H1 (cell line): ENCODE measurements at regions of chr15 and their contacts with region 1.

Region 1: DNA sequence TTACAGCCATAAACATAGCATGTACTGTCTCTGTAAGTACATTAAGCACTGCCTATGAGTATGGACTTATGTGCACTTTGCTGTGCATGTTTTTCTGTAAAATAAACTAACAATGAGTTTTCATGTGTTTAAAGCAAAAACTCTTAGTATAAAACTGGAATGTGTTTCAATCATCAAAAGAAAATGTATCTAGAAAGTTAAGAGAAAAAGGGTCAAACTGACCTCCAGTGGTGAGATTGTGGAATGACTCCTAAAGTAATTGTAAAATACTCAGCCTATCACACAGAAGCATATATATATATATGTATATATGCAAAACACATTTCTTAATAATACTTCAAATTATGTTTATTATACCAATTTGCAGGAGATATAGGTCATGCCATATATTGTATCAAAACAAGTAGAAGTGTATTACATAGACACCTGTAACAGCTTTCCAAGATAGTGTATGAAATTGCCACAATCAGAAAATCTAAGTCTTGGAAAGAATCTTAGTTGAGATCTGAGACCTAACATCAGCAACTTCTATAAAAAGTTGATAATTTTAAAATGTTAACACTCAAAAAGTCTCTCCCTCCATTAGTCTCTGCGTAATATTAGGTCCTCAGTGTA is 199.6 kb downstream of the FMN1 start:
- DNase-seq: no peak
- H3K4me3 ChIP-seq: no peak overlapping the region
- H3K27ac ChIP-seq: no peak overlapping the region
- H3K4me1 ChIP-seq: no peaks in the 10 kb centered on the region; a peak in 1 of 7 replicates
- H3K27me3 ChIP-seq: no peaks in the 10 kb centered on the region
- CTCF ChIP-seq: peak in 2 of 3 experiments; percentile 15 to 42; a peak in 2 of 4 replicates
- EP300 ChIP-seq: no peak
- POLR2A ChIP-seq: no peak
- RAD21 ChIP-seq: peak in 1 of 2 experiments; percentile 68

Region 2: DNA sequence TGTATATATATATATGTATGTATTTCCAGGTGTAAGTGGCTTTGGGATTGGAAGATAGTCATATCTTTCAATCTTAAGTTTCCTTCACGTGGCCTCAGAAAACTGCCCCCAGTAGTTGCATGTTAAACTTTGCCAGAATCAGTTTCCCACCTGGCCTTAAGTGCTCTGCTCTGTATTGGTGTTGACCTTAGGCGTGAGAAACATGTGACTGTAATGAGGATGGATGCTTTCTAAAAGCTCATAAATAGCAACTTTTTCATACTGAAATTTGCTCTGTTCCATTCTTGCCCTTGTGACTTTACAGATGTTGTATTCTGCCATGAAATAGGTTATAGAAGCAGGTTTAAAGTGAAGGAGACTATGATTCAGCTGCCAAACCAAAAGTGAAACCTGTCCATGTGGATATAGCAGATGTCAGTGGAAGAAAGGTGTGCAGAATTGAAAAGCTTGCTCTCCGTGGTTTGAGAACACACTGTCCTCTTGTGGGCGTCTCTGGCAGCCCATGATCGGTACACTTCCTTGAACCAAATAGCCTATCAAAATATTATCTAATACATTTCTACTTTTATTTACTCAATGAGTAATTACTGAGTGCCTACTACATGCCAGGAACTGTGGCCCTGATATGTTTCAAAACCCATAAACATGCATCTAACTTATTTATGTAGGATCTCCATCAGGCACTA is 337.6 kb before region 1 on chr15:
- CTCF ChIA-PET with region 1: interaction called, 100 read pairs
- POLR2A ChIA-PET with region 1: interaction called, 3 read pairs
- DNase-seq: peak in 1 of 2 experiments; percentile 13
- H3K4me3 ChIP-seq: no peak overlapping the region
- H3K27ac ChIP-seq: no peak overlapping the region
- H3K4me1 ChIP-seq: peaks cover 0 to 7% (median 0%) of the 10 kb centered on the region in 4 experiments; a peak in 4 of 7 replicates
- H3K27me3 ChIP-seq: no peaks in the 10 kb centered on the region; a peak in 1 of 7 replicates
- CTCF ChIP-seq: no peak
- EP300 ChIP-seq: no peak
- POLR2A ChIP-seq: no peak
- RAD21 ChIP-seq: no peak

Region 3: GRCh38 chr15:32669896-32670619 is 324.9 kb before region 1 on chr15:
- CTCF ChIA-PET with region 1: interaction called, 100 read pairs
- POLR2A ChIA-PET with region 1: no interaction called
- DNase-seq: no peak
- H3K4me3 ChIP-seq: no peak overlapping the region
- H3K27ac ChIP-seq: no peak overlapping the region
- H3K4me1 ChIP-seq: peaks cover 5 to 16% (median 7%) of the 10 kb centered on the region in 4 experiments
- H3K27me3 ChIP-seq: no peaks in the 10 kb centered on the region
- CTCF ChIP-seq: no peak
- EP300 ChIP-seq: no peak
- POLR2A ChIP-seq: no peak
- RAD21 ChIP-seq: no peak

Region 4: DNA sequence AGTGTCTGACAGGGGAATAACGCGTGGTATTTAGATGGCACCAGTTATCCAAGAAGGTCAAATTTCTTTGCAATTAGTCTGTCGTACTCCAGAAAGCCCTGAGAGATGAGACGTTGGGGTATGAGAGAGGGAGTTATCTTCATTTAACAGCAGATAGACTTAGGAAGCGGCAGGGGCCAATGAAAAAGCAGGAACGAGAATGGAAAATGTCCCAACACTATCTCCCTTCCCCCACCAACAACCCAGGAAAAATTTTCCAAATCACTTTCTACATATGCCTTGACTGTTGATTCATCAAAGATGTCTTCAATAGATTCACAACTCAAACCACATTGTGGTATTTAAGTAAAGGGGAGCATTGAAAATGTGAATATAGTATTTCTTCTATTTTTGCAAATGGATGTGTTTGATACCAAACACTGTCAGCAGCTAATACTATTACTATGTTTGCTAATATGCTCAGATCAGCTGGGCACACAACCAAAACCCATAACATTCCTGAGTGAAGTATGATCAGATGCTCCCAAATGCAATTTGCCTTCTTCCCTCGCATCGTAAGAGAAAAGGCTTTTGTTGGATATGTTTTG is 290.4 kb before region 1 on chr15:
- CTCF ChIA-PET with region 1: no interaction called
- POLR2A ChIA-PET with region 1: no interaction called
- DNase-seq: no peak
- H3K4me3 ChIP-seq: no peak overlapping the region
- H3K27ac ChIP-seq: no peak overlapping the region
- H3K4me1 ChIP-seq: no peaks in the 10 kb centered on the region
- H3K27me3 ChIP-seq: no peaks in the 10 kb centered on the region
- CTCF ChIP-seq: no peak
- EP300 ChIP-seq: no peak
- POLR2A ChIP-seq: no peak
- RAD21 ChIP-seq: no peak

Region 5: GRCh38 chr15:32790352-32790999 is 204.4 kb before region 1 on chr15:
- CTCF ChIA-PET with region 1: no interaction called
- POLR2A ChIA-PET with region 1: no interaction called
- DNase-seq: no peak
- H3K4me3 ChIP-seq: no peak overlapping the region
- H3K27ac ChIP-seq: no peak overlapping the region
- H3K4me1 ChIP-seq: peaks cover 0 to 7% (median 3%) of the 10 kb centered on the region in 4 experiments; a peak in 4 of 7 replicates
- H3K27me3 ChIP-seq: no peaks in the 10 kb centered on the region
- CTCF ChIP-seq: no peak
- EP300 ChIP-seq: no peak
- POLR2A ChIP-seq: no peak
- RAD21 ChIP-seq: no peak

Region 6: DNA sequence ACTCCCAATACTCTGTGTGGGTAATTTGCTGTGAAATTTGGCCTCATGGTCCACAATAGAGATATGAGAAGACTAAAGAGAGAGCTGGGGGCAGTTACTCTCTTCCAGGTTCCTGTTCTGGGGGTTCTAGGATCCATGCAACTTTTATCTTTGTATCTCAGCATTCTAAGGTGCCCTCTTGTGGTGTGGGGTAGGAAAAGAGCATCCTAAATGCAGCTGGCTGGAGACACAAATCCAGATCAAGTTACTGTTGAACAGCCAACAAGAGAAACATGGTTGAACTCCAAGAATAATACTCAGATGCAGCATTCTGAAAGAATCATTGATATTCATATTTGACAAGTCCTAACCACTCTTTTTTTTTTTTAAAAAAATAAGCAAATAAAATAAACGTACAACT is 38.9 kb before region 1 on chr15:
- CTCF ChIA-PET with region 1: interaction called, 12 read pairs
- POLR2A ChIA-PET with region 1: no interaction called
- DNase-seq: no peak
- H3K4me3 ChIP-seq: no peak overlapping the region
- H3K27ac ChIP-seq: no peak overlapping the region
- H3K4me1 ChIP-seq: peaks cover 7 to 17% (median 14%) of the 10 kb centered on the region in 4 experiments; a peak in 6 of 7 replicates
- H3K27me3 ChIP-seq: no peaks in the 10 kb centered on the region
- CTCF ChIP-seq: peak in 2 of 3 experiments; percentile 65 to 74; a peak in 3 of 4 replicates
- EP300 ChIP-seq: no peak
- POLR2A ChIP-seq: no peak
- RAD21 ChIP-seq: peak; percentile 70 to 88

Region 7: GRCh38 chr15:33021806-33022389 is 27.0 kb after region 1 on chr15:
- CTCF ChIA-PET with region 1: interaction called, 12 read pairs
- POLR2A ChIA-PET with region 1: no interaction called
- DNase-seq: no peak
- H3K4me3 ChIP-seq: no peak overlapping the region
- H3K27ac ChIP-seq: no peak overlapping the region
- H3K4me1 ChIP-seq: peaks cover 0 to 6% (median 4%) of the 10 kb centered on the region in 4 experiments
- H3K27me3 ChIP-seq: no peaks in the 10 kb centered on the region
- CTCF ChIP-seq: peak in 2 of 3 experiments; percentile 54 to 61; a peak in 2 of 4 replicates
- EP300 ChIP-seq: no peak
- POLR2A ChIP-seq: no peak
- RAD21 ChIP-seq: peak; percentile 63 to 73

Region 8: DNA sequence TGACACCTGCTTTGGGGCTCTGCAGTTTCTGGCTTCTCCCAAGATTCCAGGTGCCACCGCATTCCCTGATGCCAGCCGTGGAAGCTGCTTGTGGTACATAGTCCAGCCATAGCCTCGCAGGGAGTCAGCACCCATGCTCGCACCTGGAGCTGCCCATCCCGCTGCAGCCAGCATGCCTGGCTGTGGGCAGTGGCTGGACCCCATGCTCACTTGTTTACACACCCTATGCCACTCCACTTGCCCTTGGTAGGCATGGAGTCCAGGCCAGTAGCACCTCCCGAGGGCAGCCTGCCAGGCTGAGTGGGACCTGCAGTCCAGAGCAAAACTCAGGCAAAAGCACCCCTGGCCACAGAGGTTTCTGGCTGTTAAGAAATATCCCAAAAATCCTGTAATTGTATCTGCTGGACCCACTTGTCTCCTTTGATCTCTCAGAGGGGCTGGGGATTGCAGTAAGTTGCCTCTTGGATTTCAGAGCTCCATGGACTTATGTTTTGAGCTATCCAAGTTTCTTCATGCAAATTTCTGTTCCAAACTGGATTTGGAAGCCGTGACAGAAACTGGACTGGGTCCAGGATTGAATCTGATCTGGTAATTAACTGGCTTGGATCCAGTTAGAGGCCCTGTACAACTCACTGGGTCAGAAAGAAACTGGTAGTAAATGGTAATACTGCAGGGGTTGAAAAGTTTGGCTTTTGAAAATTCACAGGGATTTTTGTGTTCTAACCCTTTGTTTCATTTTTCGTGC is 50.3 kb after region 1 on chr15:
- CTCF ChIA-PET with region 1: no interaction called
- POLR2A ChIA-PET with region 1: no interaction called
- DNase-seq: no peak
- H3K4me3 ChIP-seq: no peak overlapping the region
- H3K27ac ChIP-seq: no peak overlapping the region
- H3K4me1 ChIP-seq: no peaks in the 10 kb centered on the region
- H3K27me3 ChIP-seq: no peaks in the 10 kb centered on the region
- CTCF ChIP-seq: no peak
- EP300 ChIP-seq: no peak
- POLR2A ChIP-seq: no peak
- RAD21 ChIP-seq: no peak

Region 9: DNA sequence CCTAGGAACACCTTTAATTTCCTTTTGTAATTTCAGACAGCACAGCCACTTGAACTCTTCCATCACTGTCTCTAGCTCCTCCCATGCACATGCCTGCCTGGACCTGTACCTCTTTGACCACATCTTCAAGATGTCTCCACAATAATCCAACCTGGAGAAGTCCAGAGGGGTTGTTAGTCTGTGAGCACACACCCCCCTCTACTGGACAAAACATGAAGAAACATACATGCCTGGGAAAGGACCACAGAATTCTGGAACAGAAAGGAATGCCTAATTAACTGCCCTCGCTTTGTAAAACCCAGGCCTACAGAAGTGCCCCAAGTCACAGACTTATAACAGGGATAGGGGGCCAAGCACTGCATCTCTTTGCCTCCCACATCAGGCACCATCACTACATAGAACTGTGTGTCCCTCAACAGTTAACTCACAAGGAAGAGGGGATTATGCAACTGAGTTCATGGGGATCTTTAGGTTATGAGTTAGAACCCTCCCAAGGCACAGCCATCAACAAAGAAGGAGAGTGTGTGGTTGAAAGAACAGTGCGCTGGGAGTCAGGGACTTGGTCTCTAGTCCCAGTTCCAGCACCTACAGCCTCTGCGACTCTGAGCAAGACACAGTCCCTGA is 137.9 kb after region 1 on chr15:
- CTCF ChIA-PET with region 1: interaction called, 34 read pairs
- POLR2A ChIA-PET with region 1: no interaction called
- DNase-seq: peak in 1 of 2 experiments; percentile 27
- H3K4me3 ChIP-seq: no peak overlapping the region
- H3K27ac ChIP-seq: no peak overlapping the region
- H3K4me1 ChIP-seq: no peaks in the 10 kb centered on the region
- H3K27me3 ChIP-seq: no peaks in the 10 kb centered on the region
- CTCF ChIP-seq: peak in 2 of 3 experiments; percentile 74; a peak in 3 of 4 replicates
- EP300 ChIP-seq: no peak
- POLR2A ChIP-seq: no peak
- RAD21 ChIP-seq: peak; percentile 89 to 94